Dorsolateral prefrontal cortex (tissue), 120 donors: ENCODE measurements at regions of chr19 and their contacts with region 1.

Region 1: GRCh38 chr19:49665351-49666119 is at the starts of genes BCL2L12 and IRF3:
- DNase-seq: peak; percentile 93 to 98 (median 96)
- H3K4me3 ChIP-seq: peak within 1 kb of the TSS; percentile 62 to 99 (median 85)
- H3K27ac ChIP-seq: peak within 1 kb of the TSS; percentile 4 to 94 (median 86)
- H3K27me3 ChIP-seq: no peaks in the 10 kb centered on the region
- CTCF ChIP-seq: peak in 24 of 56 donors; percentile 6 to 44 (median 24)
- total RNA-seq, gene BCL2L12: 0.87 to 9.6 (median 3.6) TPM
- total RNA-seq, gene IRF3: 44.4 to 102 (median 65.0) TPM

Region 2: DNA sequence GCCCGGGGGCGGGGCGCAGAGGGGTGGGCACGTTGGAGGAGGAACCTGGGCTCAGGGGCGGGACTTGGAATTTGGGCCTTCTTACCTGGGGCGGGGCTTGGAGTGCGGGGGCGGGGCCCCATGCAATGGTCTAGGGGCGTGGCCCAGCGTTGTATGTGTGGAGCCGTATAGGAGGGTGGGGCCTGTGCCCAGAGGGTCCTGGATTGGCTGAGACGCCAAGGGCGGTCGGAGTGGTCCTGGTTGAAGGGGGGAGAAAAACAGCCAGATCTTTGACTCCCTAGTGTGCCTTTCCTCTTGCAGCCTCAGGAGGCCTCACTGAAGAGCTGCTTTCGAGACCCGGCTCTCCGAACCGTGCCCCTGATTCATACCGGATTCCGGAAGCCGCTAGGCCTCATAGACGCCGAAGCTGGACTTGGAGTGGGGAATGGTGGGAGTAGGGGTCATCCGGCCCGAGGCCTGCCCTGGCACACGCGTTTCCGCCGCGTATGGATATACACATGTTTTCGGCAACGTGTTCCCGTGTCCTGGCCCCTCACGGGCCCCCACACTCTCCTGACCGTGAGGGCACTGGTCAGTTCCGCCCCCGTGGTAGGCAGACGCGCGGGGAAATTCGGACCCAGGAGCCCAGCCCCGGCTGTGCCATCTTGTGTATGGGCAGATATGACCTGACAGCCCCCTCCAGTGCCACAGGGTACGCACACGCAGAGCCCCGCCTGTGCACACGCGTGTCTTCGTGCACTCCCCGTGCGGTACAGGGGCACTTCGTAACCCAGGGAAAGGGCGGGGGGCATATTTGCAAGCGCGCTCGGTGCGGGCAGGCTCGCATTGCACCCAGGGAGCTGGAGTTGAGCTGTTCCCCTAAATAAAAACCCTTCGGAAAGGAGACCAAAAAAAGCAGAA is 75.2 kb before region 1 on chr19:
- intact Hi-C with region 1: loop called in 1 of 2 experiments (anchors 1 kb)
- DNase-seq: peak; percentile 70 to 95 (median 90)
- H3K4me3 ChIP-seq: peak overlapping the region; percentile 57 to 99 (median 79)
- H3K27ac ChIP-seq: peak overlapping the region; percentile 65 to 99 (median 96)
- H3K27me3 ChIP-seq: no peaks in the 10 kb centered on the region
- CTCF ChIP-seq: peak in 1 of 56 donors; percentile 8